ENCODE measurements at regions of chr2 and their contacts with region 1.

Region 1: GRCh38 chr2:102103992-102104871 is 38.3 kb upstream of the IL1R1 start:
- DNase-seq: peak; percentile 67
- ATAC-seq: peak; percentile 79
- H3K4me3 ChIP-seq: peak overlapping the region; percentile 53
- H3K27ac ChIP-seq: peak overlapping the region; percentile 37; the same call in 1 of the 2 replicates
- H3K4me1 ChIP-seq: no peaks in the 10 kb centered on the region
- H3K27me3 ChIP-seq: no peaks in the 10 kb centered on the region
- CTCF ChIP-seq: no peak
- EP300 ChIP-seq: peak in 1 of 2 experiments; percentile 54; a peak in 2 of 4 replicates
- POLR2A ChIP-seq: no peak
- RAD21 ChIP-seq: no peak

Region 2: DNA sequence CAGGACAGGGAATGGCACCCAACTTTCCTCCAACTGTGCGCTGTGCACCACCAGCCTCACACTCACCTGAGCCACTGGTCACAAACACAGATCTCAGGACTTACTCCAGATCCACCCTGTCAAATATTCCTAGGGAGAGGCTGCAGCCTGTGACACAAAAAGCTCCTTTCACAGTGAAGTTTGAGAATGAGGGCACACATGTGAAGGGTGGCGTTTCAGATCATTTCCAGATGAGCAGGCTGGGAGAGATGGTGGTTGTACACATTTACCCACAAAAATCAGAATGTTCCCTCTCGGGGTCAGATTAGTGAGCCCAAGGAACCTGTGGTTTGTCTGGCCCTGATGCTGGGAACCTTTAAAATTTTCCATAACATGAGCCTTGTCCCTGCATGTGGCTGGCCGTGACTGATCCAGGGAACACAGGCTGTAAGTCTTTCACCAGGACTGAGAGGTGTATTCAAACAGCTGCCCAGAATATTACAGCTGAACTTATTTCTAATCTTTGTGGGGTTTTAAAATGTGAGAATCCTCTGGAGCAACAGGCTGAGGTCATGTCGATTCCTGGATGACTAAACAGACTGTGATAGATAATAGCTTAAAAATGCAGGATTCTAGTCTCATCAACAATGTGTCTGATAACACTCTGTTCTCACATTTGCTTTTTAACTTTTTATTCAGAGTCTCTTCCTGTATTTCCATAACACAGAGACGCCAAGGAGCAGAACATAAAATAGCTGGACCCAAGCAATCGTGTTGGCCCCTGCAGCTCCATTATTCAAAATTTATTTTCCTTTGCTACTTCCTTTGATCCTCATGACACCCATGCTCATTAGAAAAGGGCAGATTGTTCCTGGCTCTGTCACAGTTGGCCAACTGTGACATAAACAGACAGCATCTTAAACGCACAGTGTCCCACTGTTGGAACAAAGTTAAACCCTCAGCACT is 76.9 kb before region 1 on chr2:
- CTCF ChIA-PET with region 1: interaction called, 31 read pairs
- POLR2A ChIA-PET with region 1: interaction called, 35 read pairs
- RAD21 ChIA-PET with region 1: interaction called, 115 read pairs
- SMC1A ChIA-PET with region 1: interaction called, 80 read pairs
- in situ Hi-C with region 1: no loop called
- intact Hi-C with region 1: loop called (anchors 1 kb)
- DNase-seq: no peak
- ATAC-seq: no peak
- H3K4me3 ChIP-seq: no peak overlapping the region
- H3K27ac ChIP-seq: no peak overlapping the region
- H3K4me1 ChIP-seq: peaks cover 7% of the 10 kb centered on the region
- H3K27me3 ChIP-seq: no peaks in the 10 kb centered on the region
- CTCF ChIP-seq: no peak
- EP300 ChIP-seq: no peak
- POLR2A ChIP-seq: no peak
- RAD21 ChIP-seq: no peak

Region 3: GRCh38 chr2:102041351-102041750 is 62.9 kb before region 1 on chr2:
- CTCF ChIA-PET with region 1: interaction called, 3 read pairs
- POLR2A ChIA-PET with region 1: no interaction called
- RAD21 ChIA-PET with region 1: interaction called, 3 read pairs
- SMC1A ChIA-PET with region 1: interaction called, 10 read pairs
- in situ Hi-C with region 1: no loop called
- intact Hi-C with region 1: no loop called
- DNase-seq: no peak
- ATAC-seq: no peak; the same call in 2 of the 3 replicates
- H3K4me3 ChIP-seq: no peak overlapping the region
- H3K27ac ChIP-seq: no peak overlapping the region
- H3K4me1 ChIP-seq: no peaks in the 10 kb centered on the region
- H3K27me3 ChIP-seq: no peaks in the 10 kb centered on the region
- CTCF ChIP-seq: no peak
- EP300 ChIP-seq: no peak
- POLR2A ChIP-seq: no peak
- RAD21 ChIP-seq: no peak

Region 4: DNA sequence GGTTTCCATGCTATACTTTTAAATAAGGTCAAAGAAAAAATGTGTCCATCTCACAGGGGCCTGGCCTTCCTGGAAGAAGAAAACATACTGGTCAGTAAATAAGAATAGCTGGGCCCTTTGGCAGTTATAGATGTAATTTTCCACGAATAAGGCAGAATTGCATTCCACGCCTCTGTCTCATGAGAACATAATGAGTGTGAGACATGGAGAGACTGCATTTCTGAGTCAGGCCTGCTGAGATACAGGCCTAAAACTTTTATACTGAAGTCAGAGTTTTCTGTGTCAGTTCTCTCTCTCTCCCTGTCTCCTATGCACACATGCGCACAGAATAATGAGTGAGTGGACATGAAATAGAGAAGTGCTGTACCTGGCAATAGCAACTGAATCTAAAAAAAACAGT is 17.9 kb after region 1 on chr2:
- CTCF ChIA-PET with region 1: interaction called, 5 read pairs
- POLR2A ChIA-PET with region 1: interaction called, 3 read pairs
- RAD21 ChIA-PET with region 1: interaction called, 10 read pairs
- SMC1A ChIA-PET with region 1: interaction called, 10 read pairs
- in situ Hi-C with region 1: no loop called
- intact Hi-C with region 1: no loop called
- DNase-seq: no peak
- ATAC-seq: no peak
- H3K4me3 ChIP-seq: no peak overlapping the region
- H3K27ac ChIP-seq: no peak overlapping the region
- H3K4me1 ChIP-seq: no peaks in the 10 kb centered on the region
- H3K27me3 ChIP-seq: no peaks in the 10 kb centered on the region
- CTCF ChIP-seq: no peak
- EP300 ChIP-seq: no peak
- POLR2A ChIP-seq: no peak
- RAD21 ChIP-seq: no peak